ENCODE measurements at regions of chr9 and their contacts with region 1.

Region 1: GRCh38 chr9:37371565-37372464 is 50.7 kb upstream of the GRHPR start:
- DNase-seq: no peak
- ATAC-seq: no peak
- H3K4me3 ChIP-seq: no peak overlapping the region
- H3K27ac ChIP-seq: no peak overlapping the region
- H3K4me1 ChIP-seq: no peaks in the 10 kb centered on the region
- H3K27me3 ChIP-seq: no peaks in the 10 kb centered on the region

Region 2: GRCh38 chr9:36866840-36867239 is 505.0 kb before region 1 on chr9:
- intact Hi-C with region 1: loop called in 1 of 2 experiments (anchors 5 kb)
- DNase-seq: peak in 1 of 2 donors; percentile 24
- ATAC-seq: no peak
- H3K4me3 ChIP-seq: no peak overlapping the region
- H3K27ac ChIP-seq: no peak overlapping the region
- H3K4me1 ChIP-seq: no peaks in the 10 kb centered on the region
- H3K27me3 ChIP-seq: no peaks in the 10 kb centered on the region

Region 3: GRCh38 chr9:37163299-37163698 is 208.5 kb before region 1 on chr9:
- intact Hi-C with region 1: no loop called
- DNase-seq: no peak
- ATAC-seq: no peak
- H3K4me3 ChIP-seq: no peak overlapping the region
- H3K27ac ChIP-seq: no peak overlapping the region
- H3K4me1 ChIP-seq: no peaks in the 10 kb centered on the region
- H3K27me3 ChIP-seq: no peaks in the 10 kb centered on the region

Region 4: GRCh38 chr9:37329576-37329975 is 42.2 kb before region 1 on chr9:
- intact Hi-C with region 1: loop called in 1 of 2 experiments (anchors 5 kb)
- DNase-seq: no peak
- ATAC-seq: no peak
- H3K4me3 ChIP-seq: no peak overlapping the region
- H3K27ac ChIP-seq: no peak overlapping the region
- H3K4me1 ChIP-seq: no peaks in the 10 kb centered on the region
- H3K27me3 ChIP-seq: no peaks in the 10 kb centered on the region